Right cardiac atrium (tissue), 5 donors: ENCODE measurements at regions of chr6 and their contacts with region 1.

Region 1: GRCh38 chr6:156564127-156564806 is 212.9 kb upstream of the ARID1B start:
- DNase-seq: peak; percentile 79 to 92 (median 91)
- ATAC-seq: peak; percentile 95 to 96
- H3K4me3 ChIP-seq: no peak overlapping the region
- H3K27ac ChIP-seq: no peak overlapping the region
- H3K4me1 ChIP-seq: no peaks in the 10 kb centered on the region
- H3K27me3 ChIP-seq: no peaks in the 10 kb centered on the region

Region 2: DNA sequence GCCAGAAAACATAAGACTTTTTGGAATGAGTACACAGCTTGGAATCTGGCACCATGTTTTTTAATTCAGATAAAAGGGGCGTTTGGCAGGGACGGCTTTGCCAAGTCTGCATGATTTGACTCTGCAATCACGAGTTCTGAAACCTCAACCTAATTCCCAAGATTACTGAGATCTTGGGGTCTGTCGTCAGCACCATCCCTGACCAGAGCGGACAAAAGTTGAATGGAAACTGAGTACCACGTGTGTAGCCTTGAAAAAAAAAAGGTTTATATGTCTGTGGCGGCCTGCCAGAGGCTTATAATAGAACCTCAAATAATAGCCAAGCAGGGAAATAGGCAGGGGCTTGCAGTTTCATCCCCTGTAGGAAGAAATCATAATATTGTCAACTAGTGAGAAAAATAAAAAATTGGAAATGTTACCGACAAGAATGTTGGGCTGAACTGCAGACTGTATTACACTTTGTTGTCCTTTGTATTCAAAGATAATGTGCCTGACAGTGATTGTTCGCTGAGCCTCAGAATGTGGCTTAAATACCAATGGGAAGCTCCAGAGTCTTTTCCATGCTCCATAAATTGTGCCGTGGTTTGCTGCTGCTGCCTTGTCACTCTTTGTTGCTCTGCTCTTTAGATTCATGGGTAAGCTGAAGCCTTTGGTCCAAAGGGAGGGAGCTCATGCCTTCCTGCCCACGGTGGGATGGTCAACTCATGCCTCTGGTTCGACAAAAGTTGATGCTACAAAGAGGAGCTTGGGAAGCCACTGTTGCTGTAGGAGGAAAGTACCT is 94.1 kb after region 1 on chr6:
- intact Hi-C with region 1: loop called in 1 of 4 experiments (anchors 10 kb)
- DNase-seq: peak in 2 of 3 donors; percentile 30 to 66
- ATAC-seq: peak; percentile 73 to 83
- H3K4me3 ChIP-seq: no peak overlapping the region
- H3K27ac ChIP-seq: peak overlapping the region; percentile 17
- H3K4me1 ChIP-seq: peaks cover 3% of the 10 kb centered on the region
- H3K27me3 ChIP-seq: no peaks in the 10 kb centered on the region

Region 3: GRCh38 chr6:157184202-157185020 is 620.1 kb after region 1 on chr6:
- intact Hi-C with region 1: loop called in 2 of 4 experiments (anchors 10 kb)
- DNase-seq: peak; percentile 75 to 91 (median 87)
- ATAC-seq: peak; percentile 82 to 83
- H3K4me3 ChIP-seq: no peak overlapping the region
- H3K27ac ChIP-seq: no peak overlapping the region
- H3K4me1 ChIP-seq: peaks cover 2% of the 10 kb centered on the region
- H3K27me3 ChIP-seq: no peaks in the 10 kb centered on the region